Endothelial cell of umbilical vein (primary cell): ENCODE measurements at regions of chr6 and their contacts with region 1.

Region 1: GRCh38 chr6:63307581-63308246 is 12.1 kb downstream of the LGSN start:
- DNase-seq: peak; percentile 53
- H3K4me3 ChIP-seq: peak overlapping the region in 1 of 3 experiments; percentile 11
- H3K27ac ChIP-seq: no peak overlapping the region
- H3K4me1 ChIP-seq: no peaks in the 10 kb centered on the region
- H3K27me3 ChIP-seq: no peaks in the 10 kb centered on the region
- CTCF ChIP-seq: peak; percentile 32 to 40
- POLR2A ChIP-seq: no peak

Region 2: GRCh38 chr6:63571881-63572732 is 264.4 kb after region 1 on chr6 and contains the starts of genes LOC128125822 and PTP4A1:
- CTCF ChIA-PET with region 1: no interaction called
- POLR2A ChIA-PET with region 1: no interaction called
- dilution Hi-C with region 1: no loop called
- intact Hi-C with region 1: loop called (anchors 5 kb)
- DNase-seq: peak; percentile 97
- H3K4me3 ChIP-seq: peak within 1 kb of the TSS; percentile 13 to 96 (median 88)
- H3K27ac ChIP-seq: peak within 1 kb of the TSS; percentile 61
- H3K4me1 ChIP-seq: peaks cover 18% of the 10 kb centered on the region
- H3K27me3 ChIP-seq: peaks cover 8 to 10% of the 10 kb centered on the region in 2 experiments
- CTCF ChIP-seq: no peak
- POLR2A ChIP-seq: peak; percentile 87
- total RNA-seq, gene PTP4A1: 58.4 and 65.1 TPM in 2 replicates